ENCODE measurements at regions of chr10 and their contacts with region 1.

Region 1: DNA sequence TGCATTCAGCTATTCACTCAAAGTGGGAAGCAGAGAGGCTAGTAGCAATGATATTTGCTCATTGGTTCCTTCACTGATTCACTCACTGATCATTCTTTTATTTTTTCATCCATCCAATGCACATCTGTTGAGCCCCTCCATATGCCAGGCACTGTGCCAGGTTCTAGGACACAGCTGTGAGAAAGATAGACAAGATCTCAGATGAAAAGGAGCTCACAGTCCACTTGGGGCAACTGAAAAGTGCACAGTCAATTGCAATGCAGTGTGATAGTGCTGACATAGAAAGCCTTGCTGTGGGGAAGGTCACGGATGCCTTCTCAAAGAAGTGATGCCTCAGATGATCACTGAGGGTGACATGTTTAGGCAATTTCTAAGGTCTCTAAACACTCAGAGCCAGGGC is 262.3 kb downstream of the PTEN start:
- DNase-seq: no peak
- H3K27ac ChIP-seq: no peak overlapping the region
- CTCF ChIP-seq: no peak

Region 2: GRCh38 chr10:87991946-87992345 is 133.8 kb before region 1 on chr10:
- CTCF ChIA-PET with region 1: interaction called, 10 read pairs
- POLR2A ChIA-PET with region 1: no interaction called
- DNase-seq: no peak
- H3K27ac ChIP-seq: no peak overlapping the region
- CTCF ChIP-seq: no peak

Measured in RWPE1 (cell line).